Cardiac septum (tissue), 1 donor: ENCODE measurements at regions of chr21 and their contacts with region 1.

Region 1: DNA sequence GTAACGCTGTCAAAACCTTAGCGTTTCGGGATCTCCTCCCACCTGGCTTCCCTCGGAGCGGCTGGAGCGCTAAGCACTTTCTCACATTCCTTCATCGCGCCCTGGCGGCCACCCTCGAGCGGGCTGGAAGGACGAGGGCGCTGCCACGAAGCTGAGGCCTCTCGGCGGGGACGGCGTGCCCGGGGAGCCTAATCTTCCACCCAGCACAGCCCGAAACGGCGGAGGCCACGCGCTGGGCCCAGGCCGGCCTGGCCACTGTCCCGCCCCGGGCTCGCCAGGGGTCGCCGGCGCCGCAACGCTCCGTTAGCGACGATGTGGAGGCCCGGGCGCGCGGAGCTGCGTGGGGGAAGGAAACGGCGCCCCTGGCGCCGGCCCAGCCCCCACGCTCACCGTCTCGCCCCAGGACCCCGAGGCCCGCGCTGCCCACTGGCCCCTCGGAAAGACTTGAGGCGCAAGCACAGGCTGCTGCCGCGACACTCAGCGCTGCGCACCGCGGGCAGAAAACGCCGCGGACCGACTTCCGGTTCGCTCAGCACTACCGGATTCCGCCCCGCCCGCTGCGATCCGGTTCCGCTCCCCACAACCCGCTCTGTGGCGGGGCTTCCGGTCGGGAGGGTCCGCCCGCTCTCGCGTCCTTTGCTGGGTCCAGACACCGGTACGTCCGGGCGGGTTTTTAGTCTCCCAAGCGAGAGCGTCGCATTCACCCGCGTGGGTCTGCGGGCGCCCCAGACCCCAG is at the start of gene YBEY:
- DNase-seq: peak; percentile 93
- total RNA-seq, gene YBEY: 14.1 TPM

Region 2: GRCh38 chr21:46228345-46229051 is 57.4 kb before region 1 on chr21 and contains the start of gene LSS:
- intact Hi-C with region 1: loop called (anchors 5 kb)
- DNase-seq: peak; percentile 98
- total RNA-seq, gene LSS: 34.9 TPM

Region 3: DNA sequence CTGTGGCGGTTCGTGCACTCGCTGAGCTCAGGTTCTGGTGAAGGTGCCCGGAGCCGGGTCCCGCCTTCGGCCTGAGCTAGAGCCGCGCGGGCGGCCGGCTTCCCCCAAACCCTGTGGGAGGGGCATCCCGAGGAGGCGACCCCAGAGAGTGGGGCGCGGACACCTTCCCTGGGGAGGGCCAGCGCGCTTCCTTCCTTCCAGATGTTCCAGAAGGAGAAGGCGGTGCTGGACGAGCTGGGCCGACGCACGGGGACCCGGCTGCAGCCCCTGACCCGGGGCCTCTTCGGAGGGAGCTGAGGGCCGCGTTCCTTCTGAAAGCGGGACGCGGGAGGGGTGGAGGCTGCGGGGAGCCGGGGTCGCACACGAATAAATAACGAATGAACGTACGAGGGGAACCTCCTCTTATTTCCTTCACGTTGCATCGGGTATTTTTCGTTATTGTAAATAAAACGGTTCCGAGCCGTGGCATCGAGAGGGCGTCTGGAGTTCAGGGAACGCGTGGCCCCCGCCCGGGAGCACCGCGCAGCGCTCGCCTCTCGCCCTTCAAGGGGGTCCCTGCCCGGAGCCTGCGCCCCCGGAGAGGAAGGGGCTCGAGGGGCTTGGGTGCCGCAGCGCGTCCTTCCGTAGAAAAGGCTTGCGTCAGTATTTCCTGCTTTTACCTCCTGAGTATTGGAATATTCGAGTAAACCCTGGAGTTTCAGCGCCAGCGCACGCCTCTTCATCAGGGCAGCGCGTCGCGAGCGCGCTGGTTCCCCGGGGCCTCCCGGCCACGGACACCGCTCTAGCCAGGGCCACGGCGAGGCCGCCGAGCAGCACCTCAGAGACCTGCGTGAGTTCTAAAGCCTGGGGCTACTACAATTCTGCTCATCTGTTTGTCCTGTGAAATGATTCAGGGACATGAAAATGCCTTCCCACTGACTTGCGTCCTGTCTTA is 11.7 kb after region 1 on chr21:
- intact Hi-C with region 1: loop called (anchors 1 kb)
- DNase-seq: no peak

Region 4: DNA sequence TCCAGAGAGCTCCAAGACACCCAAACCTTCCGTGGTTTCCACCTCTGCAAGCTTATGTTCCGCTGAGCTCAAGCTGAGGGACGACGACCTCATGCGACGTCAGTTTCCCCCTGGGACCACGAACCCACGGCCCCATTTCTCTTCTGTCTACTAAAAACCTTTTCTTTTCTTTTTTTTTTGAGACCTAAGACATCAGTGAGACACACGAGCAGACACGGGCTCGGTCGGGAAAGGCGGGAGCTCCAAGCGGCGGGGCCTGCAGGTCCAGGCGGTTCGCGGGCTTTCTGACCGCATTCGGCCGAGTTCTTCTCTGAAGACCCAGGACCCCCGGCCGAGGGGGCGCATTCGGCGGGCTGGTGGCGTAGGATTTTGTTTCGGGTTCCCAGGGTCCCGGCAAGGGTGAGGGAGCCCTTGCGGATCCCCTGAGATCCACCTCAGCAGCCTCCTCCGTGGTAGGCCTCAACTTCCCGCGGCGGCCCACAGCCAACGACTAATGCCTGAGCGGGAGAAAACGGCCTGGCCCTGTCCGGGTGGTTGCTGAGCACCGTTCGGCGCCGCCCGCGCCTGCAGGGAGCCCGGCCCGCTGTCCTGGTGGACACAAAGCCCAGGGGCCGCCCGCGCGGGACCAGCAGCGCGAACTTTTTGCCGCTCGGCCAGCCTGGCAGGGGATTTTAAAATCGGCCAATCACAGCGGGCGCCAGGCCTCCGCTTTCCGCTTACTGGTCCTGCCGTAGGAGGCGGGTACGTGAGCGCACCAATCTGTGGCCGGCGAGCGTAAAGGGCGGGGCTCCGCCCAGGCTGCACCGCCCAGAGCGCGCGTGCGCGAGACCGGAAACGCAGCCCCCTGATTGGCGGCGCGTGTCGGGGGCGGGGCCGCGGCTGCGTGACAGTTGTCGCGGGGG is 37.5 kb after region 1 on chr21 and contains the start of gene C21orf58:
- intact Hi-C with region 1: loop called (anchors 2 kb)
- DNase-seq: peak; percentile 99
- total RNA-seq, gene C21orf58: 1.4 TPM

Region 5: DNA sequence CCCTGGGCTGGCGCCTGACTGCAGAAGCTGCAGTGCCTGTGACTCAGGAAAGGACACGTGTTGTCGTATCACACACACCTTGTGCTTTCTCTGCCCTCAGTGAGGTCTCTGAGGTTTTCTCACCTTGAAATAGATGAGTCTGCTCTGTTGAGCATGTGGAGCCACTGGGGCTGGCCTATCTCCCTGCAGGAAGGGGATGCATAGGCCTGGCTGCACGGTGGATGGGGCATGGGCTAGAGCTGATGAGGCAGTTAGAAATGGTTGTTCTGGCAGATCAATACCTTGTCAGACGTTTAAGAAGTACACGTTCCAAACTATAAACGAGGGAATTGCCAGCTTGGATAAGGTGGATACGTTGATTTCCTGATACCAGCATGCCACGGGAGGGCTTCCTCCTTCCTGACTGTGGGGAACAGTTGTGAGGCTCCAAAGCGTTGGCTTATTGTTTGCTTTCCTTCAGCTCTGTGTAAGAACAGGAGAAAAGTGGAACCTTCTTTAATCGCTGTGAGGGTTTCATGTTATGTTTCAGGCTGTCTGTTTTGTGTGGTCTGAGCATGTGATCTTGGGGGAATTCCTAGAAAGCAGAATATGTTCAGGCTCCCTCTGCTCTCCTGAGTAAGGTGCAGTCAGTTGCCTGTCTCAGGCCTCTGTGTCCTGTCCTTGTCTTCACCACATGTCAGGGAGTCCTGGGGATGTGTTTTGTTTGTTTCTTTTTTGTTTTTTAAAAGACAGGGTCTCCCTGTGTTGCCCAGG is 82.8 kb after region 1 on chr21:
- intact Hi-C with region 1: no loop called
- DNase-seq: no peak

Region 6: DNA sequence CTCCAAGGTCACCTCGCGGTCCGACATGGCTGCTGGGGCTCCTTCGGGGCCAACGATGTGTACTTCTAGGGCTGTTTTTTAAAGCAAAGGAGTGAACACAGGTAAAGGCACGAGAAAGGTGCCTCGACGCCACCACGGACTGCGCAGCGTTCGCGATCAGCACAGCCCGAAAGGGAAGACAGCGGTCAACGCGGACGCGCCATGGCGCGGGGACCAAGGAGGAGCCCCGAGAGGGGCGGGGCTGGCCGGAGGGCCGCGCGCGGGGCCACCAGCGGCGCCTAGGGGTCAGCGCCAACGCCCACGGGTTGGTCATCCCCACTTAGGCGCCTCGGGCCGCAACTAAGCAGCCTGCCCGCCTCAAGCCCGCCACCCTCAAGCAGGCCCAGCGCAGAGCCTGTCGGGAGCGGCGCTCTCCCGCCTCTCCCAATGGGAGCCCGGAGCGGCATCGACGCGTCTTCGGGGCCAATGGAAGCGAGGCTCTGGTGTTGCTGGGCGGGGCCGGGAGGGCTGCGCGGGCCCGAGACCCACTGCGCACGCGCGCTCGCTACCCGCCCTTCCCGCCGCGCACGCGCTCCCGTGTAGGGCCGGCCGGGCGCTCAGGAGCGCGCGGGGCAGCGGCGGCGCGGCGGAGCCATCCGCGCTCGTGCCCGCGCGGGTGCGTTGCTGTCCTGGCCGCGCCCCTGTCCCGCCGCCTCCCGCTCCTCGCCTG is 172.5 kb after region 1 on chr21 and contains the start of gene DIP2A:
- intact Hi-C with region 1: no loop called
- DNase-seq: peak; percentile 98
- total RNA-seq, gene DIP2A: 38.9 TPM

Region 7: DNA sequence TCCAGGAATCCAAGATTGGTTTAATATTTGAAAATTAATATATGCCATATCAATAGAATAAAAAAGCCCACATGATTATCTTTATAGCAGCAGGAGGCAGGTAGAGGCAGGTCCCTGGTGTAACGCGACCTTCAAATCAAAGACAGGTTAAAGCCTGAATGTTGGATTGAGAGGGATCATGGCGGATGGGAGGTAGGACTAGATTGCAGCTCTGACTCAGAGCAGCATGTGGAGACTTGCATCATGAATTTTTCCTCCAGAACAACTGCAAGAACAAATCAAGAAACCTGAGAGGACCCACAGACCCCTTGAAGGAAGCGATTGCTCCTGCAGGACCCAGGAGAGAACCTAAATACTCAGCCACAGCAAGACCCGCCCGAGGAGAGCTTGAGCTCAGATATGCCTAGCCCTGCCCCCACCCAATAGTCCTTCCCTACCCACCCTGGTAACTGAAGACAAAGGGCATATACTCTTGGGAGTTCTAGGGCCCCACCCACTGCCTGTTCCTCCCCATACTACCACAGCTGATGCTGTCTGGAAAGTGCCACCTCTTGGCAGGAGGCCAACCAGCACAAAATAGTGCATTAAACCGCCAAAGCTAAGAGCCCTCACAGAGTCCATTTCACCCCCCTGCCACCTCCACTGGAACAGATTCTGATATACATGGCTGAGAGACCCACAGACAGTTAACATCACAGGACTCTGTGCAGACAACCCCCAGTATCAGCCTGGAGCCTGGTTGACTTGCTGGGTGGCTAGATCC is 299.4 kb after region 1 on chr21:
- intact Hi-C with region 1: no loop called
- DNase-seq: no peak